Activated naive CD4-positive, alpha-beta T cell treated with anti-CD3 and anti-CD28 coated beads for 36 hours (primary cell): ENCODE measurements at regions of chr2 and their contacts with region 1.

Region 1: GRCh38 chr2:84925724-84926376 is 20.4 kb downstream of the TMSB10 start:
- DNase-seq: peak; percentile 100
- H3K4me3 Mint-ChIP-seq: peak overlapping the region; percentile 87
- H3K27ac Mint-ChIP-seq: peak overlapping the region; percentile 97
- H3K4me1 Mint-ChIP-seq: peaks cover 49% of the 10 kb centered on the region
- H3K27me3 Mint-ChIP-seq: no peaks in the 10 kb centered on the region

Region 2: DNA sequence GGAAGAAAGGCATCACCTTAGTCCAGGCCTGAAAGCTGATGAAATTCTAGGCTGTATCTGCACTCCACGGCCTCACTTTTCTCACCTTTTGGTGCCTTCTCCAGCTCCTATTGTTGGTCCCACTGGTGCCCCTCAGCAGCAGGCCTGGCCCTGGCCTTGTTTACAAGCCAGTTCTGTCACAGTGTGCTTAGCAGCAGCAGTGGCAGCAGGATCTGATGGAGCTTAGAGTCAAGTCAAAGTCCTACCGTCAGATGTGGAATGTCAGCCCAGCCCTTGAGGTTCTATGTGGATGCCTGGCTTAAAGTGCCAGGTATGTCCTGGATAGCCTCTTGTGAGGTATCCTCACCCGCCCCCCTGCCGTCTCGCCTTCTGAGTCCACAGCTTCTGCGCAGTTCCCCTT is 748.1 kb before region 1 on chr2:
- CTCF ChIA-PET with region 1: no interaction called
- intact Hi-C with region 1: no loop called
- DNase-seq: no peak
- H3K4me3 Mint-ChIP-seq: no peak overlapping the region
- H3K27ac Mint-ChIP-seq: no peak overlapping the region
- H3K4me1 Mint-ChIP-seq: no peaks in the 10 kb centered on the region
- H3K27me3 Mint-ChIP-seq: no peaks in the 10 kb centered on the region

Region 3: GRCh38 chr2:84631047-84631446 is 294.8 kb before region 1 on chr2:
- CTCF ChIA-PET with region 1: no interaction called
- intact Hi-C with region 1: loop called (anchors 1 kb)
- DNase-seq: no peak
- H3K4me3 Mint-ChIP-seq: no peak overlapping the region
- H3K27ac Mint-ChIP-seq: no peak overlapping the region
- H3K4me1 Mint-ChIP-seq: peaks cover 12% of the 10 kb centered on the region
- H3K27me3 Mint-ChIP-seq: no peaks in the 10 kb centered on the region

Region 4: DNA sequence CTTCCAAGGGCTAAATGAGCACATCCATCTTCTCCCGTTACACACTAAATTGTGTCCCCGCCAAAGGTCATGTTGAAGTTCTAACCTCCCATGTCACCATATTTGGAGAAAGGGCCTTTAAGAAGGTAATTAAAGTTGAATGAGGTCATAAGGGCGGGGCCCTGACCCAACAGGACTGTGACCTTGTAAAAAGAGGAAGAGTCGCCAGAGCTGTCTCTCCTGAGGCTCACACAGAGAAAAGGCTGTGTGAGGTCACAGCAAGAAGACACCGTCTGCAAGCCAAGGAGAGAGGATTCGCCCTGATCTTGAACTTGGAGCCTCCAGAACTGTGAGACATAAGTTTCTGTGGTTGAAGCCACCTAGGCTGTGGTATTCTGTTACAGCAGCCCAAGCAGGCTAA is 69.1 kb before region 1 on chr2:
- CTCF ChIA-PET with region 1: interaction called, 16 read pairs
- intact Hi-C with region 1: no loop called
- DNase-seq: peak; percentile 76
- H3K4me3 Mint-ChIP-seq: peak overlapping the region; percentile 73
- H3K27ac Mint-ChIP-seq: peak overlapping the region; percentile 91
- H3K4me1 Mint-ChIP-seq: peaks cover 94% of the 10 kb centered on the region
- H3K27me3 Mint-ChIP-seq: no peaks in the 10 kb centered on the region

Region 5: DNA sequence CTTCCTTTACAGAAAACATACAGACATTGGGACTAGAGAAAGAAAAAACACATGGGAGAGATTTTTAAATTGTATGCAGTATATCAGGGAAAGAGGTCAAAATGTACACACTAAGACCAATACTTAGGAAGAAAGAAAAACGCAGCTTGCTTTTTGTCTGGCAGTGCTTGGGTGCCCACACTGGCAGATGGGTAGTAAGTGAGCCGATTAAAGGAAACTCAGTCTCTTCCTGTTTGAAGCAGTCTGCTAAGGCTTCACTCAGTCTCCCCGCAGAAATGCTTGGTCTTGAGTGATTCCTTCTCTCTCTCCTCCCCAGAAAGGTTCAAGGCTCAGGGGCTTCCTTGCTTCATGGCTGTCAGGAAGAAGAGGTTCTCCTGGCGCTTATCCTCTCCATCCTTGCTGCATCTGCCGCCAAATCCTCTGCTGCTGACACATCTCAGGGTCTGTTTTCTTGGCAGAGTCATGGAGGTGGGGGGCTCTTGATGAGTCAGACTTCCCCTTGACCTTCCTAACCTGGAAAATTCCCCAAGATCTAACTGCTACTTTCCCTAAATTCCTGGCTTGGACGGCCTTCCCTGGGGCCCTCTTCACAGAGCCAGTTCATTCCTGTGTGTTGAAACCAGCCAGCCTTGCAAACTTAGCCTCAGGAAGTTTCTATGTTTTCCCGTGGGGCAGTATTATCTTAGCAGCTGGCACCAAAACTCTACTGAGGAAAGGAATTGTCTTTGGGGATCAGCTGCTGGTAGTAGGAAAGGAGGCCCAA is 30.9 kb before region 1 on chr2:
- CTCF ChIA-PET with region 1: interaction called, 61 read pairs
- intact Hi-C with region 1: no loop called
- DNase-seq: peak; percentile 44
- H3K4me3 Mint-ChIP-seq: peak overlapping the region; percentile 59
- H3K27ac Mint-ChIP-seq: peak overlapping the region; percentile 91
- H3K4me1 Mint-ChIP-seq: peaks cover 60% of the 10 kb centered on the region
- H3K27me3 Mint-ChIP-seq: no peaks in the 10 kb centered on the region

Region 6: DNA sequence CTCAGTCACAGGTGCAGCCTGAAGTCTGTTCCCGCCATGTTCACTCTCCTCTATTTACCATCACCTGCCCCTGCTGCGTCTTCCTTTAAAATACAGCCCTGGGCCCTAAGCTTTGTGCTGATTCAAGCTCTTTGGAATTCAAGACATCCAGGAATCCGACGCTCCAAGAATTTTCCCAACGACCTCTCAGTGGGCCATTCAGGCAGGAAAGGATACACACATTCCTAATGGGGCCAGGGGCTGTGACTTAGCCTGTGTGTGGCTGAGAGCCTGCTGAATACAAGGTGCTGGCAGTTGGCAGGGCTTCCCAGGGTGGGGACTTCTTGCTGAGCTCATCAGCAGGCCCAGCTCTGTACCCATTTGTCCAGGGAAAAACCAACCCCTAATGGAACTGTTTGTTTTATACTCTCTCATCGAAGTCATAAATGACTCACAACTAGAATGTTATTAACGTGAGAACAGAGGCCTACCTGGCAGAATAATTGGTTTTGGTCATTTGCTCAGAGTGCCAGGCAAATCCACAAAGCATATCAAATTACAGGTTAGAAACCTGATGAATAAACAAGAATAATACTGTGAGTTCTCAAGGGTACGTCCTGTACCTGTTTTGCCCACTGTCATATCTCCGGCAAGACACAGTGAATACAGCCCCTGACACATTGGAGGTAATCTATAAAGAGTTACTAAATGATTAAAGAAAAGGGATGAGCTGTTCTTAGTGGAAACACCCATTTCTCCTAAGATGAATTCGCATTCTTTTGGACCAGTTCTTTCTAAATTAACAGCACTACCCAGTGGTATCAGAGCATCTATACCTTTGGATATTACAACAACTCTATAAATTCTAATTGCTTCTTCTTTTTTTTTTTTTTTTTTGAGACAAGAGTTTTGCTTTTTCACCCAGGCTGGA is 32.5 kb after region 1 on chr2:
- CTCF ChIA-PET with region 1: interaction called, 10 read pairs
- intact Hi-C with region 1: no loop called
- DNase-seq: no peak
- H3K4me3 Mint-ChIP-seq: no peak overlapping the region
- H3K27ac Mint-ChIP-seq: peak overlapping the region; percentile 50
- H3K4me1 Mint-ChIP-seq: peaks cover 32% of the 10 kb centered on the region
- H3K27me3 Mint-ChIP-seq: no peaks in the 10 kb centered on the region

Region 7: GRCh38 chr2:85132834-85133637 is 207.2 kb after region 1 on chr2 and contains the start of gene TCF7L1:
- CTCF ChIA-PET with region 1: interaction called, 3 read pairs
- intact Hi-C with region 1: loop called (anchors 1 kb)
- DNase-seq: peak; percentile 52
- H3K4me3 Mint-ChIP-seq: peak within 1 kb of the TSS; percentile 67
- H3K27ac Mint-ChIP-seq: no peak within 1 kb of the TSS
- H3K4me1 Mint-ChIP-seq: peaks cover 9% of the 10 kb centered on the region
- H3K27me3 Mint-ChIP-seq: peaks cover 53% of the 10 kb centered on the region
- total RNA-seq, gene TCF7L1: 0.07 TPM in 1 of 2 experiments, not detected in the other

Region 8: DNA sequence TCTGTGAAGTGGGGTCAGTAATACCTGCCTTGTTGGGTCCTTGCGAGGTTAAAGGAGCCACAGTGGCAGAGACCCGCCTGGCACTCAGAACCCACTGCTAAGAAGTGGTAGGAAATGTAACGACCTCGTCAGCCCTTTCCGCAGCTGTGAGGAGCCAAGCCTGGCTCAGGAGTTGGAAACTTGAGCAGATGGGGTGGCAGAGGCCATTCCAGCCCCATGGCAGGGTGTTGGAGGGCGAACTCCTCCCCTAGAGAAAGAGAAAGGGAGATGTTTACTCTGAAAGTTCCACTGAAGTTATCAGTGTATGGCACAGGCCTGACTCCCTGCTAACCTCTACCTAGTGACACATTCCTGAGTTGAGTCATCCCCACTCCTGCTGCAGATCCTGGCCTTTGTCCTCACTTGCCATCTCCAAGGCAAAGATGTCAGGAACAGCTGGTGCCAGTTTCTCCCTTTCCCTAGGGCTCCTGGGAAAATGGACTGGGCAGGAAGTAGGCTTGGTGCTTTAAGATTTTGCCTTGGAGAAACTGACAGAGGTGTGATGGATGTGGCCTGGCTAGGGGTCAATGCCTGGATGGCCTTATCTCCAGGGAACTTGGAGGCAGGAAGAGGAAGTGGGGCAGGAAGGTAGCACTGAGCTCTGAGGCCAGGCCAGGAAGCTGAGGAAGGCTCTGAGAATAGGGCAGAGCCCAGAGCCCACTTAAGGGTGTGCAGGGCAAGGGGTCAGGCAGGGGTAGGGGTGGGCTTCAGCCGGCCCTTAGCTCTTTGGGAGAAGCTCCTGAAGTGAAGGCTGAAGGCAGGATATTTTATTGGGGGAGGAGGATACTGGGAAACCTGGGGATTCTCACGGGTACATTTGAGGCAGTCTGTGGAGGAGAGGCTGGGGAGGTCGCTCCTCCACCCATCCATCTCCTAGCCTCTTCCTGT is 659.3 kb after region 1 on chr2:
- CTCF ChIA-PET with region 1: no interaction called
- intact Hi-C with region 1: no loop called
- DNase-seq: peak; percentile 50
- H3K4me3 Mint-ChIP-seq: peak overlapping the region; percentile 79
- H3K27ac Mint-ChIP-seq: peak overlapping the region; percentile 83
- H3K4me1 Mint-ChIP-seq: peaks cover 40% of the 10 kb centered on the region
- H3K27me3 Mint-ChIP-seq: no peaks in the 10 kb centered on the region